ENCODE measurements at regions of chr10 and their contacts with region 1.

Region 1: GRCh38 chr10:89853781-89854191 is 152.4 kb downstream of the KIF20B start:
- DNase-seq: no peak
- ATAC-seq: no peak
- H3K4me3 ChIP-seq: no peak overlapping the region
- H3K27ac ChIP-seq: no peak overlapping the region
- H3K4me1 ChIP-seq: no peaks in the 10 kb centered on the region
- H3K27me3 ChIP-seq: 0 out of 2 replicates have a peak, but pooled peaks cover 2% of the 10 kb centered on the region
- CTCF ChIP-seq: peak; percentile 42

Region 2: GRCh38 chr10:89601728-89602361 is 251.9 kb before region 1 on chr10:
- CTCF ChIA-PET with region 1: interaction called, 13 read pairs
- POLR2A ChIA-PET with region 1: no interaction called
- in situ Hi-C with region 1: no loop called
- intact Hi-C with region 1: no loop called
- DNase-seq: no peak
- ATAC-seq: no peak
- H3K4me3 ChIP-seq: no peak overlapping the region
- H3K27ac ChIP-seq: no peak overlapping the region
- H3K4me1 ChIP-seq: no peaks in the 10 kb centered on the region
- H3K27me3 ChIP-seq: no peaks in the 10 kb centered on the region
- CTCF ChIP-seq: no peak

Region 3: GRCh38 chr10:89894051-89894450 is 40.3 kb after region 1 on chr10:
- CTCF ChIA-PET with region 1: no interaction called
- POLR2A ChIA-PET with region 1: no interaction called
- in situ Hi-C with region 1: no loop called
- intact Hi-C with region 1: no loop called
- DNase-seq: no peak
- ATAC-seq: no peak
- H3K4me3 ChIP-seq: no peak overlapping the region
- H3K27ac ChIP-seq: no peak overlapping the region
- H3K4me1 ChIP-seq: no peaks in the 10 kb centered on the region
- H3K27me3 ChIP-seq: no peaks in the 10 kb centered on the region; the same call in 1 of the 2 replicates
- CTCF ChIP-seq: no peak